ENCODE measurements at regions of chr2 and their contacts with region 1.

Region 1: DNA sequence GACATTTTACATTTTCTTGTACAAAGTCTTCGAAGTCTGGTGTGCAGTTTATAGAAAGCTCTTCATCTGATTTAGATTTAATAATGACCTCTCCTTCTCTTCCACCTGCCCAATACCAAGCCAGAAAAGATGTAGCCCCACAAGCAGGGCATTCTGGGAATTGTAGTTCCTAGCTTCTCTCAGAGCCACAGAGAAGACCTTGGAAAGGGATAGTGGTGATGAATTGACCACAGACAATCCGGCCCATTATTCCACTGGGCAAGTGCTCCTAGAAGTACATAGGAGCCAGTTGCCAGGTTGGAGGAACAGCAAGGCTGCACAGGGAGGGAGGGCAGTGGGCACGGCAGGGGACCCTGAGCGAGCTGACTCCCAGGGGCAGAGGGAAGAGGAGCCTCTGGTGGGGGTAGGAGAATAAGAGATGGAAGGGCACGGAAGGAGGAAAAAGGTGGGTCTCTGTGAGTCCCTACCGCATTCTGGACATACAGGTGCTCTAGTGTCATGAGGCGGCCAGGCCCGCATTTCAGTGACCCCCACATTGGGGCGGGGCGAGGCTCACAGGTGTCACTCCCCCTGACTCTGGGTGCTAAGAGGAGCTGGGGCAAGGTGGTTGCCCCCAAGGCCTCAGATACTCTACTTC is 152.5 kb upstream of the HAAO start:
- DNase-seq: no peak
- ATAC-seq: no peak
- H3K4me3 Mint-ChIP-seq: no peak overlapping the region
- H3K27ac Mint-ChIP-seq: no peak overlapping the region
- H3K4me1 Mint-ChIP-seq: peaks cover 4% of the 10 kb centered on the region
- H3K27me3 Mint-ChIP-seq: peaks cover 2% of the 10 kb centered on the region

Region 2: DNA sequence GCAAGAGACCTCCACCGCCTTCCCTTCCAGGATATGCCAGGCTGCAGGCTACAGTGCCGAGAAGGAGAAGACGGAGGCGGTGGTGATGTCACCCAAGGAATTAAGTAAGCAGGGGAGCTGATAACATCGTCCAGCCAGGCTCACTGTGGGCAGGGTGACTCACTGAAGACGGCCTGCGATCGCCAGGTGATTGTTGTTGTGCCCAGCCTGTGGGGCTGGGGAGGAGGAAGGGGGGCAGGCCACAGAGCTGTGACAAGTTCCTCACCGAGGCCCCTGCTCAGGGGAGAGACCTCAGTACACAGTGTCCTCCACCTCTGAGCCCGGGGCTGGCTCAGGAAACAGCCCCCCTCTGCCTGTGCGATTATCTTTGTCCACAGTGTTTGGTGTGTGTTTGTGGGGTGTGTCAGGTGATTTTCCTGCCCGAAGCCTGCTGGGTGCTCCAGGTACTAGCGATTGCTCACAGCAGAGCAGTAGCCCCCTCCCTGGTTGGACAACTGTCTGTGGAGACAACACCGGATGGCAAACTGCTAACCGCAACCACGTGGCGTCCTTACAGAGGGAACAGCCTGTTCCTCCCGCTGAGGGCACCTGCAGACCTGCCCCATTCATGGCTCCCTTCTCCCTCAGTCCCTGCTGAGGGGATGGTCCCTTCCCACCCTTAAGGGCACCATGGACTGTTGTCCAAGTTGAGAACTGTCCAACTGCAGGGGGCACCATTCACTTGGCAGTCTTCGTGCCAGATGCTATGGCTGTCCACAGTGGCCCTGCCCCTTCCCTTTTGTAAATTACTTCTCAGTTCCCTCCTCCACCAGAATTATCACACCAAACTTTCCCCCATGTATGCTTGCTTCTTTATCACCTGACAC is 186.4 kb after region 1 on chr2:
- CTCF ChIA-PET with region 1: interaction called, 10 read pairs
- POLR2A ChIA-PET with region 1: interaction called, 3 read pairs
- DNase-seq: peak; percentile 94
- ATAC-seq: peak; percentile 40
- H3K4me3 Mint-ChIP-seq: peak overlapping the region; percentile 59
- H3K27ac Mint-ChIP-seq: peak overlapping the region; percentile 100
- H3K4me1 Mint-ChIP-seq: peaks cover 91% of the 10 kb centered on the region
- H3K27me3 Mint-ChIP-seq: no peaks in the 10 kb centered on the region